ENCODE measurements at regions of chr15 and their contacts with region 1.

Region 1: DNA sequence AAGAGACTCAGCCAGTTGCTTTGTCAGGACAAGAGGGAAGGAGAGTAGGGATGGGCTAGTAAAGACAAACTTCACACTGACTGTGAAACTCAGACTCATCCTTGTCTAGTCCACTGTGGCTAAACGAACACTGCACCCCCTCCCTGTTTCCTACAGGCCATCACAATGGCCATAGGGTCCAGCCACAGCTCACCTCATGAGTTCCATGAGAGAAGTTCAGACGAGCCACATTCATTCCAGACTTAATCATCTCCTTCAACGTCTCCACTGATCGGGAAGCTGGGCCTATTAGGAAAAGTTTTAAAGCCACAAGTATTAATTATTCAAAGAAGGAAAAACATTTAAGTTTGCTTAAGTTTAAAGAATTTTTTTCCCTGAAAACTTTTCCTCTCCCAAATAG is 13.8 kb downstream of the PKM start:
- DNase-seq: no peak
- ATAC-seq: no peak
- H3K4me3 ChIP-seq: no peak overlapping the region
- H3K27ac ChIP-seq: no peak overlapping the region
- H3K4me1 ChIP-seq: peaks cover 10% of the 10 kb centered on the region
- H3K27me3 ChIP-seq: no peaks in the 10 kb centered on the region
- CTCF ChIP-seq: no peak
- POLR2A ChIP-seq: no peak
- RAD21 ChIP-seq: no peak

Region 2: DNA sequence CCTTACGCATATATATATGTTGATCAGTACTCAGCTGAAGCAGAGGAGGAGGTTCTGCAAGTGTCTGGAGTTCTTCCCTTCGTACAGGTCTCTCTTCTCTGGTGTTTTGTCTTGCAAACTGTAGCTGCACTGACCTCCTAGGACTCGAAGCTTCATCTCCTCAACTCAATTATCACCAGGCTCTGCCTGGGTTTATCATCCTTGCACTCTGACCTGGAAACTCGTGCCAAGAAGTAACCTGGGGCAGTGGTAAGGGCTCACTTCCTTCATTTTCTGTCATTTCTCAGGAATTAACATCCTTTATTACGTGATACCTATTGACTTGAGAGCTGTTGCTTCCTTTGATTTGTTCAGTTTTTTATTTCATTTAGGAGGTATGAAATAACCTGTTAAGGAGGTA is 1240.1 kb after region 1 on chr15:
- CTCF ChIA-PET with region 1: no interaction called
- POLR2A ChIA-PET with region 1: interaction called, 10 read pairs
- dilution Hi-C with region 1: no loop called
- in situ Hi-C with region 1: no loop called
- intact Hi-C with region 1: no loop called
- DNase-seq: no peak
- ATAC-seq: no peak
- H3K4me3 ChIP-seq: no peak overlapping the region
- H3K27ac ChIP-seq: no peak overlapping the region
- H3K4me1 ChIP-seq: no peaks in the 10 kb centered on the region
- H3K27me3 ChIP-seq: peaks cover 8% of the 10 kb centered on the region
- CTCF ChIP-seq: no peak
- POLR2A ChIP-seq: no peak
- RAD21 ChIP-seq: no peak

Measured in IMR-90 (cell line).